ENCODE measurements at regions of chr1 and their contacts with region 1.

Region 1: DNA sequence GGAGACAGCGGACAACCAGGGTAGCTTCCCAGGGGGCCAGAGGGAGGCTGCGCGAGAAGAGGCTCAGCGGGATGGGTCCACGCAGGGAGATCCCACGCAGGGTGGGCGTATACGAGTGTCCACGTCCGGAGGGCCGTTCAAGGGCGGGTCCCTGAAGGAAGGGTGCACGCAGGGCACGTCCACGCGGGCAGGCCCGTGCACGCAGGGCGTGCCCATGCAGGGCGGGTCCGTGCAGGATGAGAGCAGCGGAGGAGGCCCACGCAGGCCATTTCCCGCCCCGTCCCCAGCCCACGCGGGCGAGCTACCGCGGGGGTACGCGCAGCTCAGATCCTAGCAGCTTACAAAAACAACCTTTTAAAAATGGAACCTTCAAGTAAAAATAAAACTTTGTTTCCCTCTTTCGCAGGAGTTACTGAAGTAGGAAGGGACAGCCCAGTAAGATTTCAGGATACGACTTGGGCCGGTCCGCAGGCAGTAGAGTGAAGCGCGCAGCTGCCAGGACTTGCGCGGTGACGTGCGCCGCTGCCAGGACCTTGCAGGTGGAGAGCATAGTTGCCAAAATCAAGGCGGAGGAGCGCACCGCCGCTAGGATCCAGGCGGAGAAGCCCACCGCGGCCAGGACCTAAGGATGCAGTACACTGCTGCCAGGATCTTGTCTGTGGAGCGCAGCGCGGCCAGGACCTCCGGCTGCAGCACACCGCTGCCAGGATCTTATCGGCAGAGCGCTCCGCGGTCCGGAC is 416 bp upstream of the RNF187 start:
- DNase-seq: peak; percentile 75 to 91
- H3K4me3 ChIP-seq: peak overlapping the region; percentile 91
- CTCF ChIP-seq: no peak
- POLR2A ChIP-seq: no peak

Region 2: DNA sequence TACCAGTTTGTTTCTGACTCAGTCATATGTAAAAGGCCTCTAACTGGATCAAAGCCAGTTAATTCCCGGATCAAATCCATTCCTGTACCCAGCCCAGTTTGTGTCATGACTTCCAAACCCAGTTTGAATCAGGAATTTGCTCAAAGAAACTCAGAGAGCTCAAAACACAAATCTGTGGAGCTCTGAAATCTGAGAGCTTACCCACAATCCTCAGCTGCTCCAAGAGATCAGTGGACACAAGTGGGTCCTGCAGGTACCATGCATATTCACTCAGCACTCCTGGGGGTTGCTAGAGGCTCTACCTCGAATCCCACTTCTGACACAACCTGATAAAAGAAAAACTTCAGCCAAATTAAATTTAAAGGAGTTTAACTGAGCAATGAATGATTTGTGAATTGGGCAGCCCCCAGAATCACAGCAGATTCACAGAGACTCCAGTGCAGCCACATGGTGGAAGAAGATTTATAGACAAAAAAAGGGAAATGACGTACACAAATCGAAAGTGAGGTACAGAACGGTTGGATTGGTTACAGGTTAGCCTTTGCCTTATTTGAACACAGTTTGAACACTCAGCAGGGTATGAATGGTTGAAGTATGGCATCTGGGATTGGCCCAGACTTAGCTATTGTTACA is 365.8 kb before region 1 on chr1:
- intact Hi-C with region 1: loop called (anchors 10 kb)
- DNase-seq: peak in 1 of 2 donors; percentile 10
- H3K4me3 ChIP-seq: no peak overlapping the region
- CTCF ChIP-seq: no peak
- POLR2A ChIP-seq: no peak

Region 3: GRCh38 chr1:228544021-228544850 is 57.5 kb after region 1 on chr1:
- intact Hi-C with region 1: no loop called
- DNase-seq: peak in 1 of 2 donors; percentile 42
- H3K4me3 ChIP-seq: no peak overlapping the region
- CTCF ChIP-seq: no peak
- POLR2A ChIP-seq: no peak

Measured in lower leg skin (tissue), 4 donors.